ENCODE measurements at regions of chr2 and their contacts with region 1.

Region 1: DNA sequence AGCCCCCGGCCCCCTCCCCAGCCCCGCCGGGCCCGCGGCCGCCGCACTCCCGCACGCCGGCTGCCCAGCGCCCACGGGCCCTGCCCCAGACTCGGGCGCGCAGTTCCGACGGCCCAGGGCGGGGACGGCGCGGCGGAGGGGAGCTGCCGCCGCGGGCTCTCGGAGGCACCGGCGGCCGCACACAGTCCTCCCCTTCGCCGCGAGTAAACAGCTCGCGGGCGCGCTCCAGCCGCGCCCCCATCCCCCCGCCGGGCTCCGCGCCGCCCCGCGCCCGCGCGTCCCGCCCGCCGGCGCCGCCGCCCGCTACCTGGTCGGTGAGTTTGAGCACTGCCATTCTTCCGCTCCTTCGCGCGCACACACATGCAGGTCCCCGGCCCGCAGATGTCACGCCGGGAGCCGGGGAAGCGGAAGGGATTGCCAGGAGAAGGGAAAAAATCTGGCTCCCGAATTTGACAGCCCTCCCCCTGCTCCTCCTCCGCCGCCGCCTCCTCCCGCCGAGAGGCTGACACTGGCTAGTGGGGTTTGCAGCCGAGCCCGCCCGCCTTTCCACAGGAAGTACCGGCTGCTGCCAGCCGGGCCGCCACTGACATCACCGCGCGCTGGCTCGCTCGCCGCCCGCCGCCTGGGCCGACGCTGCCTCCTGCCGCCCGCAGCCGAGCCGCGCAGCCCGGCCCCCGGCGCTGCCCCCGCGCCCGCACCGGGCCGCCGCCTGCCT is at the start of gene ANKRD44:
- DNase-seq: peak; percentile 92
- ATAC-seq: peak; percentile 65
- H3K4me3 Mint-ChIP-seq: peak within 1 kb of the TSS; percentile 92
- H3K27ac Mint-ChIP-seq: peak within 1 kb of the TSS; percentile 92
- H3K4me1 Mint-ChIP-seq: peaks cover 57% of the 10 kb centered on the region
- H3K27me3 Mint-ChIP-seq: no peaks in the 10 kb centered on the region
- total RNA-seq, gene ANKRD44: 240 to 243 TPM

Region 2: GRCh38 chr2:197191177-197191939 is 119.1 kb before region 1 on chr2:
- POLR2A ChIA-PET with region 1: interaction called, 16 read pairs
- DNase-seq: no peak
- ATAC-seq: peak; percentile 30
- H3K4me3 Mint-ChIP-seq: peak overlapping the region; percentile 11
- H3K27ac Mint-ChIP-seq: peak overlapping the region; percentile 46
- H3K4me1 Mint-ChIP-seq: peaks cover 67% of the 10 kb centered on the region
- H3K27me3 Mint-ChIP-seq: no peaks in the 10 kb centered on the region

Region 3: GRCh38 chr2:197209742-197210408 is 100.6 kb before region 1 on chr2:
- POLR2A ChIA-PET with region 1: interaction called, 75 read pairs
- DNase-seq: no peak
- ATAC-seq: peak; percentile 23
- H3K4me3 Mint-ChIP-seq: peak overlapping the region; percentile 68
- H3K27ac Mint-ChIP-seq: peak overlapping the region; percentile 84
- H3K4me1 Mint-ChIP-seq: peaks cover 92% of the 10 kb centered on the region
- H3K27me3 Mint-ChIP-seq: no peaks in the 10 kb centered on the region

Region 4: DNA sequence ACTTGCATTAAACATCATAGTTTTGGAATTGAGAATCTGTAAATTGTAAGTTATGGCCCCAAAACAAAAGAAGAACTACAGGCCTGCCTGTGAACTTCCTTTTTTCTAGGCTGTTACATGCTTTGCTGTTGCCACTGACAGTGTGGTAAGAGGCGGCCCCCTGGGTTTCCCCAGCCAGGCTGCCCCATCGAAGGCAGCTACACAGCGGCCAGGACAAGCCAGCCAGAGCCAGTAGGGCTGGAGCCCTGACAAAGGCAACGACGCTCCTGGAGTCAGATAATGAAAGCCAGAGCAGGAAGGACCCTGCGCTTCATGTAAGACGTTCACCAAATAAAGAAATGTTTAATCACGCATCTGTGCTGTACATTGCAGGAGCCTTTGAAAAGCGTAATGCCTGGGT is 54.9 kb before region 1 on chr2:
- POLR2A ChIA-PET with region 1: interaction called, 58 read pairs
- DNase-seq: peak; percentile 77
- ATAC-seq: peak; percentile 95
- H3K4me3 Mint-ChIP-seq: peak overlapping the region; percentile 84
- H3K27ac Mint-ChIP-seq: peak overlapping the region; percentile 92
- H3K4me1 Mint-ChIP-seq: peaks cover 62% of the 10 kb centered on the region
- H3K27me3 Mint-ChIP-seq: no peaks in the 10 kb centered on the region

Region 5: DNA sequence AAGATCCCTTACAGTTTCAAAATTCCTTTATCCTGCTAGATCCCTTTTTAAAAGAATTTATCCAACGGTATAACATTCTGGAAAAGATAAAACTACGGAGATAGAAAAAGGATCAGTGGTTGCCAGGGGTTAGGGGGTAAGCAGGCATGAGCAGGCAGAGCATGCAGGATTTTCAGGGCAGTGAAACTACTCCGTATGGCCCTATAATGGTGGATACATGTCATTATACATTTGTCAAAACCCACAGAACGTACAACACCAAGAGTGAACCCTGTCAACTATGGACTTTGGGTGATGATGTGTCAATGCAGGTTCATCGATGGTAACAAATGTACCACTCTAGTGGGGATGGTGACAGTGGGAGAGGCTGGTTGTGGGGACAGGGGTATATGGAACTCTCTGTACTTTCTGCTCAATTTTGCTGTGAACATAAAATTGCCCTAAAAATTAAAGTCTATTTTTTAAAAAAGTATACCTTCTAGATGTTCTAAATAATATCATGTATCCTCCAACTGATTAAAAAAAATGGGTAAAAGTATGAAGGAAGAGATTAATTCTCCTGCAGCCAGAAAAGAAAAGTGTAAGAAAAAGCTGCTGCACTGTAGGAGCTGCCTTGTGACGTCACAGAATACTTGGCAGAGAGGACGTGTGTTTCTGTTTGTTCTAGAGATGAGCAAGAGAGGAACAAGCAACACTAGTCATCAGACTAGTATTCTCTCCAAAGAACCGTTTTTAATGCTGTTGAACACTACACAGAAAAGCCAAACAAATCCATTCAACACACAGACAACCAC is 23.4 kb before region 1 on chr2:
- POLR2A ChIA-PET with region 1: interaction called, 122 read pairs
- DNase-seq: no peak
- ATAC-seq: peak; percentile 93
- H3K4me3 Mint-ChIP-seq: peak overlapping the region; percentile 73
- H3K27ac Mint-ChIP-seq: peak overlapping the region; percentile 95
- H3K4me1 Mint-ChIP-seq: peaks cover 58% of the 10 kb centered on the region
- H3K27me3 Mint-ChIP-seq: no peaks in the 10 kb centered on the region

Region 6: DNA sequence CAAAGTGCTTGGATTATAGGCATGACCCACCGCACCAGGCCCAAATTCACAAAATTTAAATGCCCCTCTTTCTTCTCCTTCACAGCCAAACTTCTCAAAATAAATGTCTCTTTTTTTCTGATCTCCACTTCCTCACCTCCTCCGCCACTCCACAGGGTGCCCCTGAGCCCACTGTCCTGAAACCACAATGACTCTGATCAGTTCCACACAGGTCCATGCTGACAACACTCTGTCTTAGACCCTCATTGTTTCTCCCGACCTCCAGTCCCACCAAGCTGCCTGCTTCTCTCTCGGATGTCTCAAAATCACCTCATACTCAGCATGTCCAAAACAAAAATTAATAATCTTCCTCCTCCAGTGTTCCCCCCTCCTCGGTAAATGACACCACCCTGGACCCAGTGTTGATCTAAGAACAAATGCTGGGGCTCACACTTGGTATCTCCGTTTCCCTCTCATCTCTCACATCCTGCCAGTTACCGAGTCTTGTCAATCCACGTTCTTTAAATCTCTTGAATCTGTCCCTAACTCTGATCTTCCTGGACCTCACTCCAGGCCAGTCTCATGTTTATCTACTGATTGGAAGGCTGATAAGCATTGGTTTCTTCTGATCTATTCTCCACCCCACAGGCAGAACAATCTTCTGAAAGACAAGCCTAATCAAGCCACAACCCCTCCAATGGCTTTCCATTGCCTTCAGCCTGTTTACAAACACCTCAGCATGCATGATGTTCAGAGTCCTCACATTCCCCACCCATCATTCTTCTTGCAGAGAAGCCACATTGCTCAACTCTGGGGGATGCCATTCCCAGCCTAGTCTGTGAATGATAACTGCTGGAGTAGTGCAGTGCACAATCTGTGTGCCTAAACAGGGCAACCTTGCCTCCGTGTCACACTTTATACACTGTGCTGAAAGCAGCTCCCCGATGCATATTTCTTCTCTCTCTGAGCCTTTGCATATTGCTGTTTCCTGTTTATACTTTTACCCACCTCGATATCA is 12.6 kb after region 1 on chr2:
- POLR2A ChIA-PET with region 1: interaction called, 26 read pairs
- DNase-seq: peak; percentile 47
- ATAC-seq: peak; percentile 78
- H3K4me3 Mint-ChIP-seq: peak overlapping the region; percentile 74
- H3K27ac Mint-ChIP-seq: peak overlapping the region; percentile 89
- H3K4me1 Mint-ChIP-seq: peaks cover 40% of the 10 kb centered on the region
- H3K27me3 Mint-ChIP-seq: no peaks in the 10 kb centered on the region

Region 7: DNA sequence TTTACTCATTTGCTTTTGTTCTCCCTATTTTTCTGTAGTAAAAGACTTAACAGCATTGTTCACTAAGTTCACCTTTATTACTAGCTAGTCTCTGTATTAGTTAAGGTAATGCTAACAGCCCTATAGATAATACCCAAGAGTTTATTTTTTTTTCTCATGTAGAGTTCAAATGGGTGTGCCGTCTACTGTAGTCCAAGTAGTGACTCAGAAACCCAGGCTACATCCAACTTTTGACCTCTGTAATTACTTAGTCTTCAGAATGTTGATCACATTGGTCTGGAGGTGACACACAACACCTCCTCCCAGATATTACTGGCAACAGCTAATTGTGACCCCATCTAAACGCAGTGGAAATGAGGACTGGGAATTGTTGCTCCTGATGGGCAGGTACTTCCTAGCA is 150.6 kb after region 1 on chr2:
- POLR2A ChIA-PET with region 1: no interaction called
- DNase-seq: no peak
- ATAC-seq: no peak
- H3K4me3 Mint-ChIP-seq: no peak overlapping the region
- H3K27ac Mint-ChIP-seq: no peak overlapping the region
- H3K4me1 Mint-ChIP-seq: peaks cover 11% of the 10 kb centered on the region
- H3K27me3 Mint-ChIP-seq: no peaks in the 10 kb centered on the region